ENCODE measurements at regions of chr4 and their contacts with region 1.

Region 1: DNA sequence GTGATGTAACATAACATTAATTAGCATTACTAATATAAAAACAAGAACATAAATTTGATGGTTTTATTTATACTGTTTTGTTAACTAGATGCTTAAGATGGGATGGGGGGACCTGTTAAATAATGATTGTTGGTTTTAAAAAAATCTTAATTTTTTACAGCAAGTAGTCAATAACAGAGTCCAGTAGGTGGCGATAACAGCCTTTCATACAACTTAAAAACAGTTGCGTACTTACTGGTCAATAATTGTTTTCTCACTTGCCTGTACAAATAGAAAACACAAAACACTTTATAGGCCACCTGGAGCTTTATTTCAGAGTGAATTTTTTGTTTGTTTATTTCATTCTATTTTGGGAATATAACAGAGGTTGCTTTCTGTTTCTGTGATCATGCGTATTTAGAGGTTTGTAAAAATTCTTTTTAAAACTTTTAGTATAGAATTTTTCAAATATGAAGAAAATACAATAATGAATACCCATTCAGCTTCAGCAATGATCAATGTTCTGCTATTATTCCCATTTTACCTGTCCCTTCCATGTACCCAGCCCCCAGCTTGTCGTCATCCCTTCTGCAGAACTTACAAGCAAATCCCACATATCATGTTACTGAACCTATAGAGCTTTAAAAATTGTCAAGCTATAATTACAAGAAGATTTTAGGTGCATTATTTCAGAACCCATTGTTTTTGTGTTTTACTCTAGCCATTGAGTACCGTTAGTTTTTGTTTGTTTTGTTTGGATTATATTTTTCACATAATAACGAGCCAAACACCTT is 97.1 kb downstream of the MRPL1 start:
- DNase-seq: peak; percentile 66
- H3K4me3 ChIP-seq: no peak overlapping the region
- H3K27ac ChIP-seq: no peak overlapping the region
- H3K4me1 ChIP-seq: no peaks in the 10 kb centered on the region
- CTCF ChIP-seq: peak; percentile 98

Region 2: GRCh38 chr4:78517050-78517652 is 557.4 kb after region 1 on chr4:
- CTCF ChIA-PET with region 1: no interaction called
- POLR2A ChIA-PET with region 1: no interaction called
- intact Hi-C with region 1: loop called (anchors 5 kb)
- DNase-seq: peak; percentile 27
- H3K4me3 ChIP-seq: no peak overlapping the region
- H3K27ac ChIP-seq: no peak overlapping the region
- H3K4me1 ChIP-seq: no peaks in the 10 kb centered on the region
- CTCF ChIP-seq: peak; percentile 87